ENCODE measurements at regions of chr22 and their contacts with region 1.

Region 1: DNA sequence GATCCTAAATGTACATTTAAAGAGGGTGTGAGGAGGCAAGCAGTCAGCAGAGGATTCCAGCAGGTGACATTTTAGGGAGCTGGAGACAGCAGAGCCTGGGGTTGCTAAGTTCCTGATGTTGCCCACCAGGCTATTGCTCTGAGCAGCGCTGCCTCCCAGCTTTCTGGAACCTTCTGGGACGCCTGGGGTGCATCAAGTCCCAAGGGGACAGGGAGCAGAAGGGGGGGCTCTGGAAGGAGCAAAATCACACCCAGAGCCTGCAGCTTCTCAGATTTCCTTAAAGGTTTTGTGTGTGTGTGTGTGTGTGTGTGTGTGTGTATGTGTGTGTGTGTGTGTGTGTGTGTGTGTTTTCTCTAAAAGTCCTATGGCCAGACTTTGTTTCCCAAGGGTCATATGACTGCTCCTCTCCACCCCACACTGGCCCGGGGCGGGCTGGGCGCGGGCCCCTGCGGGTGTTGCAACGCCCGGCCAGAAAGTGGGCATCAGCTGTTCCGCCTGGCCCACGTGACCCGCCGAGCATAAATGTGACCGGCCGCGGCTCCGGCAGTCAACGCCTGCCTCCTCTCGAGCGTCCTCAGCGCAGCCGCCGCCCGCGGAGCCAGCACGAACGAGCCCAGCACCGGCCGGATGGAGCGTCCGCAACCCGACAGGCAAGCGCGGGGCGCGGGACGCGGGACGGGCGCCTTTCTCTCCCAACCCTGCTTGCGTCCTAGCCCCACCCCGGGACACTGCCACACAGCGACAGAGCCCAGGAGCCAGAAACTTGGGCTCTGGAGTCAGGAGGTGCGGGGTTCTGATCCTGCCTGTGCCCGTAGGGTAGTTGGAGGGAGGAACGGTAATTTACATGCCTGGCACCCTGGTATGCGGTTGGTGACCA is at the start of gene HMOX1:
- DNase-seq: peak; percentile 93 to 95
- H3K4me3 ChIP-seq: peak within 1 kb of the TSS; percentile 83
- H3K4me3 Mint-ChIP-seq: peak within 1 kb of the TSS; percentile 94
- H3K27ac Mint-ChIP-seq: peak within 1 kb of the TSS; percentile 96
- H3K4me1 ChIP-seq: peaks cover 45% of the 10 kb centered on the region
- H3K4me1 Mint-ChIP-seq: peaks cover 40% of the 10 kb centered on the region
- H3K27me3 ChIP-seq: no peaks in the 10 kb centered on the region
- H3K27me3 Mint-ChIP-seq: no peaks in the 10 kb centered on the region
- CTCF ChIP-seq: no peak
- total RNA-seq, gene HMOX1: 68.3 and 93.0 TPM in 2 replicates

Region 2: DNA sequence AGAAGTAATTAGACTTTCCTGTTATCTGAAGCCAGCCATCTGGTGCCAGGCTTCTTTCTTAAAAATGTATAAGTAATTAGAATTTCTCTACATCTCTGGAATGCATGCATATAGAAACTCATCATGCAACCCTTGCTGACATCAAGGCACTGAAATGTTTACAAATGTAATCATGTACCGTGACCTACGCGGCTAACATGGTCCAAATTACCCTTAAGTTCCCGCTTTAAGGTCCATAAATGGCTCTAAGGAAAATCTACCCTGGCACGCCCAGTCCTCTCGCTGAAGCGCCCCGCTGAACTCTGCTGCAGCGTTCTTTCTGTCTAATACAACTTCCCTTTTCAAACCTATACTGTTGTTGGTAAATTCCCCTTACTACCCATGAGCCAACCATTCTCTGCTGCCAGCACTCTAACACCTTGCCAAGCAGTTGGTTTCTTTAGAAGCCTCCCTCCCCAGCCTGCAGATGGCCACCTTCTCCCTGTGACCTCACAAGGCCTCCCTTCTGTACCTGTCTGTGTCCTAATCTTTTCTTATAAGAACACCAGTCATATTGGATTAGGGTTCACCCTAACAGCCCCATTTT is 13.4 kb before region 1 on chr22:
- CTCF ChIA-PET with region 1: interaction called, 4 read pairs
- POLR2A ChIA-PET with region 1: interaction called, 12 read pairs
- intact Hi-C with region 1: loop called (anchors 1 kb)
- DNase-seq: no peak
- H3K4me3 ChIP-seq: no peak overlapping the region
- H3K4me3 Mint-ChIP-seq: no peak overlapping the region
- H3K27ac Mint-ChIP-seq: peak overlapping the region; percentile 64
- H3K4me1 ChIP-seq: peaks cover 33% of the 10 kb centered on the region
- H3K4me1 Mint-ChIP-seq: peaks cover 29% of the 10 kb centered on the region
- H3K27me3 ChIP-seq: no peaks in the 10 kb centered on the region
- H3K27me3 Mint-ChIP-seq: no peaks in the 10 kb centered on the region
- CTCF ChIP-seq: no peak

Region 3: GRCh38 chr22:35399678-35400334 is 19.0 kb after region 1 on chr22 and contains the start of gene MCM5:
- CTCF ChIA-PET with region 1: no interaction called
- POLR2A ChIA-PET with region 1: interaction called, 5 read pairs
- intact Hi-C with region 1: loop called (anchors 2 kb)
- DNase-seq: peak; percentile 97 to 98
- H3K4me3 ChIP-seq: peak within 1 kb of the TSS; percentile 97
- H3K4me3 Mint-ChIP-seq: peak within 1 kb of the TSS; percentile 97
- H3K27ac Mint-ChIP-seq: peak within 1 kb of the TSS; percentile 98
- H3K4me1 ChIP-seq: peaks cover 5% of the 10 kb centered on the region
- H3K4me1 Mint-ChIP-seq: peaks cover 5% of the 10 kb centered on the region
- H3K27me3 ChIP-seq: no peaks in the 10 kb centered on the region
- H3K27me3 Mint-ChIP-seq: no peaks in the 10 kb centered on the region
- CTCF ChIP-seq: no peak
- total RNA-seq, gene MCM5: 99.6 and 107 TPM in 2 replicates

Region 4: DNA sequence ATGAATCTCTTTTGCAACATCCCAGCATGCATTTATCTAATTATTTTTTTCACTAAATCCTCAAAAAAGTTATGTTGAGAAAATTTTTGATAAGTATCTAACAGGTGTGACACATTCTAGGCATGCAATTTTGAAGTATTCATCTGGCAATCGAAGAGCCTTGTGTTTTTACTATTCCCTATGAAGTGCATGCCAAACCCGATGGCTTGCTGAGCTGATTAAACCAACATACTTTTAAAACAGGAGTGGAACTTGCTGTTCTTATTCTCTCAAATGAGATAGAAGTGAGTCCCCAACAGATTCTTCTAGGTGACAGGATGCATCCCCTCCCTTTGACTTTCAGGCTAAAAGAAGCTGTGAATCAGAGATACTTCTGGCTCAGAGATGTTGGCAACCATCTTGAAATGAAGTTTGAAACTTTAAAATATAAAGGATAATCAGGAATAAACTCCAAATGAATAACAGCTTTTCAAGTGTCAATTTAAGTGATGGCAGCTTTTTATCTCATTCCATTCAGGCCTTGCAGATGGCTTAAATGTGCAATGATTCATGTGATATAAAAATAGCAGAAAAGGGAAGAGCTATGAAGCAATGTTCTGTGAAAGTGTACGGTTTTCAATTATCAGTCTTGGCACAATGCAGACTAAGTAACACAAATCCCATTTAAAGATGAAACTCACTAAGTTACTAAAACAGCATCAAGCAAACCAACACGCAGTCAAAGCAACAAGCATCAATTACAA is 404.6 kb after region 1 on chr22:
- CTCF ChIA-PET with region 1: no interaction called
- POLR2A ChIA-PET with region 1: no interaction called
- intact Hi-C with region 1: no loop called
- DNase-seq: no peak
- H3K4me3 ChIP-seq: no peak overlapping the region
- H3K4me3 Mint-ChIP-seq: no peak overlapping the region
- H3K27ac Mint-ChIP-seq: no peak overlapping the region
- H3K4me1 ChIP-seq: no peaks in the 10 kb centered on the region
- H3K4me1 Mint-ChIP-seq: peaks cover 7% of the 10 kb centered on the region
- H3K27me3 ChIP-seq: no peaks in the 10 kb centered on the region
- H3K27me3 Mint-ChIP-seq: no peaks in the 10 kb centered on the region
- CTCF ChIP-seq: no peak